ENCODE measurements at regions of chr2 and their contacts with region 1.

Region 1: GRCh38 chr2:134457765-134458472 is 204.0 kb downstream of the MGAT5 start:
- DNase-seq: no peak
- H3K4me3 ChIP-seq: no peak overlapping the region
- H3K27ac ChIP-seq: no peak overlapping the region
- H3K4me1 ChIP-seq: no peaks in the 10 kb centered on the region
- H3K27me3 ChIP-seq: no peaks in the 10 kb centered on the region
- CTCF ChIP-seq: no peak
- POLR2A ChIP-seq: no peak

Region 2: DNA sequence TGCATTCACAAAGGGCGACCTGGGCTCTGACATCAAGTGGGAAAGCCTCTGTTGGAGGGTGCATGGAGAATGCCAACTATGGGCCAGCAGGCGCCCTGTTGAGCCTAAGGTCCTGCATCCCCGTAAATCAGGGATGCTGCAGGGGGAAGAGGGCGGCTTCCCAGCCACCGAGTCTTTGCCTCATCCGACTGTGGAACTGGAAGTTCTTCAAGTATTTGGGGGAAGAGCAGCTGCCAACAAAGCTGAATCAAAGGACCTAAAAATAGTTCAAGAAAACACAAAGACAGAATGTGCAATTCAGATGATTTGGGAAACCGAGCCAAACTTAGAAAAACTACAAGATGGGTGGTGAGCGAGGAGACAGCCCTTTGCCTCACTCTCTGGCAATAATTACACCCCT is 485.1 kb before region 1 on chr2:
- intact Hi-C with region 1: no loop called
- DNase-seq: peak in 5 of 7 donors; percentile 13 to 48 (median 34)
- H3K4me3 ChIP-seq: no peak overlapping the region
- H3K27ac ChIP-seq: no peak overlapping the region
- H3K4me1 ChIP-seq: peaks cover 16 to 28% of the 10 kb centered on the region in 2 donors
- H3K27me3 ChIP-seq: no peaks in the 10 kb centered on the region
- CTCF ChIP-seq: no peak
- POLR2A ChIP-seq: no peak

Region 3: DNA sequence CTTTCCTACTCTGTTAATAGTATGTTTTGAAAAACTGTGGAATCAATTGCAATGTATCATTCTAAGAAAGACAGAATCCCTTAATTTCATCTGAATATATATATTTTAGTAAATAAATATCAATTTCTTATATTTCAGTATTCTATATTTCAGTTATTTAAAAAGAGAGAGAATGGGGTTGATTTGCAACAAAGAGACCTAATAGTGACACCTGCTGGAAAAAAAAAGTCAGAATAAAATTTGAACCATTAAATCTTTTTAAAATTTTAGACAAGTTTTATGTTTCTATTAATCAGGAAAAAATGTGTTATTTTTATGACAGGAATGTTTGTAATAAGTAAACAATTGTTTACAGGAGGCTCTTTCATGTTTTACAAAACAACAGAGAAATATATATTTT is 440.0 kb after region 1 on chr2:
- intact Hi-C with region 1: loop called in 1 of 2 experiments (anchors 2 kb)
- DNase-seq: no peak
- H3K4me3 ChIP-seq: no peak overlapping the region
- H3K27ac ChIP-seq: no peak overlapping the region
- H3K4me1 ChIP-seq: no peaks in the 10 kb centered on the region
- H3K27me3 ChIP-seq: no peaks in the 10 kb centered on the region
- CTCF ChIP-seq: peak; percentile 21 to 59 (median 40)
- POLR2A ChIP-seq: no peak

Region 4: GRCh38 chr2:134918526-134919340 is 460.8 kb after region 1 on chr2 and contains the start of gene CCNT2:
- intact Hi-C with region 1: loop called in 1 of 2 experiments (anchors 10 kb)
- DNase-seq: peak; percentile 99 to 100 (median 99)
- H3K4me3 ChIP-seq: peak within 1 kb of the TSS; percentile 79 to 99 (median 88)
- H3K27ac ChIP-seq: peak within 1 kb of the TSS; percentile 93 to 99 (median 99)
- H3K4me1 ChIP-seq: peaks cover 19 to 45% of the 10 kb centered on the region in 2 donors
- H3K27me3 ChIP-seq: no peaks in the 10 kb centered on the region
- CTCF ChIP-seq: peak in 3 of 6 experiments; percentile 9 to 13 (median 12)
- POLR2A ChIP-seq: peak in 1 of 2 donors; percentile 4
- total RNA-seq, gene CCNT2: 7.7 to 47.5 (median 29.5) TPM

Measured in adrenal gland (tissue), 19 donors.